Testis (tissue), 5 donors: ENCODE measurements at regions of chr9 and their contacts with region 1.

Region 1: DNA sequence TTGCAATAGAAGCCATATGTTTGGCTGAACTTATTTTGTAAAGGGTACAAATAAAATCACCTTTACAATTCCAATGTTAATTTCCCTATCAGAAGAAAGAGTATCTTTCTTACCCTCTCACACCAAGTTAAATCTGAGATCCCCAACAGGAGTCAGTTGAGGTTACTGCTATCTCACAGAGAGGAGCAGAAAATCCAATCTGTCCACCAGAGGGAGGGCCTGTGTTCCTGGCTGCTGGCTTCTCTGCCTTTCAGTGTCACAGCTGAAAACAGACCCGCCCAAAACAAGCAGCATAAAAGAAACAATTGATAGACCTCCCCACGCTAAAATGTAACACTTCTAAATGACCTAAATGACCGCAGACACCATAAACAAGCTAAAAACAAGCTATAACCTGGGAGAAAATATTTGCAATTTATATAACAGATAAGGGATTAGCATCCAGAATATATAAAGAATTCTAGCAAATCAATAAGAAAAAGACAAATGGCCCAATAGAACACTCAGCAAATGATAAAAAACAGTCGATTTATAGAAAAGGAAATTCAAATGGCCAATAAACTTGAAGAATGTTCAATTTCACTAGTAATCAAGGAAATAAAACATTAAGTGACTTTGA is 24.5 kb upstream of the MVB12B start:
- DNase-seq: peak; percentile 87
- H3K4me3 ChIP-seq: no peak overlapping the region
- H3K27ac ChIP-seq: peak overlapping the region in 1 of 2 donors; percentile 9
- H3K4me1 ChIP-seq: no peaks in the 10 kb centered on the region
- H3K27me3 ChIP-seq: no peaks in the 10 kb centered on the region
- CTCF ChIP-seq: peak; percentile 49 to 79 (median 69)
- POLR2A ChIP-seq: no peak

Region 2: GRCh38 chr9:126407125-126407870 is 105.2 kb after region 1 on chr9:
- intact Hi-C with region 1: loop called (anchors 10 kb)
- DNase-seq: no peak
- H3K4me3 ChIP-seq: no peak overlapping the region
- H3K27ac ChIP-seq: no peak overlapping the region
- H3K4me1 ChIP-seq: peaks cover 11% of the 10 kb centered on the region
- H3K27me3 ChIP-seq: no peaks in the 10 kb centered on the region
- CTCF ChIP-seq: no peak
- POLR2A ChIP-seq: no peak

Region 3: GRCh38 chr9:126490871-126491567 is 188.9 kb after region 1 on chr9:
- intact Hi-C with region 1: loop called (anchors 10 kb)
- DNase-seq: peak; percentile 74
- H3K4me3 ChIP-seq: no peak overlapping the region
- H3K27ac ChIP-seq: no peak overlapping the region
- H3K4me1 ChIP-seq: no peaks in the 10 kb centered on the region
- H3K27me3 ChIP-seq: no peaks in the 10 kb centered on the region
- CTCF ChIP-seq: peak; percentile 96 to 100 (median 99)
- POLR2A ChIP-seq: no peak